Heart right ventricle (tissue), 16 donors: ENCODE measurements at regions of chr10 and their contacts with region 1.

Region 1: DNA sequence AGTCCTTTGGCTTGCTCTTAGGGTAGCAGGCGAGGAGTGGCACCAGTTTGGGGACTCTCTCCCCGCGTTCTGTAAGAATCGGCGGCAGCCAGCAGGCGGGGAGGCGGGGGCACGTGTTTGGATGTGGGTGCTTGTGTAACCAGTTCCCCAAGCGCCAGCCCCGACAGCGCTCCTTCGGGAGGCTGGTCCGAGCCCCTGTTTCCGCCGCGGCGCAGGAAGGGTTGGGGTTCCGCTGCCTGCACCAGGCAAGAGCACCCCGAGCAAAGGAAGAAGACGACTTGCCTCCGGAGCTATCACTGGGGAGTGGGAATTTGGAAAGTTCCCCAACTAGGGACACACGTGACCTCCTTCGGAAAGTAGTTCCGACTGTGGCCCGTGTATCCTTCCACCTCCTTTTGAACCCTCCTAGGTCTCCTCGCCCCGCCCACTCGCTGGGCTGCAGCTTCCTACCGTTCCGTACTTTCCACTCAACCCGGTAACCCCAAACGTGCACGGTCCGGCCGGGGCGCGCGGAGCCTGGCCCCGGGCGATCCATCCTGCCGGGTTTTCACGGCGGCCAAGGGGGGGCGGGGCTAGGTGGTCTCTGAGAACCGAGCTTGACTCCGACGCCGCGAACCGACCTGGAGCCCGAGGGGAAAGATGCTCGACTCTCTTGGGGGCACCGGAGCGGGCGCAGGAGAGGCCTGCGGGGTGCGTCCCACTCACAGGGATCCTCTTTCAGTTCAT is 1.2 kb downstream of the KLLN start:
- DNase-seq: peak; percentile 96 to 97
- ATAC-seq: peak; percentile 86 to 95 (median 92)
- H3K4me3 ChIP-seq: peak overlapping the region; percentile 77 to 90 (median 85)
- H3K27ac ChIP-seq: peak overlapping the region; percentile 91 to 99 (median 98)
- H3K4me1 ChIP-seq: peaks cover 0 to 20% (median 16%) of the 10 kb centered on the region in 9 donors
- H3K27me3 ChIP-seq: no peaks in the 10 kb centered on the region
- CTCF ChIP-seq: peak in 2 of 9 donors; percentile 7 to 20

Region 2: GRCh38 chr10:87700031-87700796 is 161.9 kb before region 1 on chr10:
- intact Hi-C with region 1: no loop called
- DNase-seq: no peak
- ATAC-seq: peak in 2 of 8 donors; percentile 11 to 19
- H3K4me3 ChIP-seq: no peak overlapping the region
- H3K27ac ChIP-seq: peak overlapping the region in 4 of 10 donors; percentile 11 to 43 (median 27)
- H3K4me1 ChIP-seq: peaks cover 0 to 8% (median 0%) of the 10 kb centered on the region in 9 donors
- H3K27me3 ChIP-seq: no peaks in the 10 kb centered on the region
- CTCF ChIP-seq: no peak

Region 3: DNA sequence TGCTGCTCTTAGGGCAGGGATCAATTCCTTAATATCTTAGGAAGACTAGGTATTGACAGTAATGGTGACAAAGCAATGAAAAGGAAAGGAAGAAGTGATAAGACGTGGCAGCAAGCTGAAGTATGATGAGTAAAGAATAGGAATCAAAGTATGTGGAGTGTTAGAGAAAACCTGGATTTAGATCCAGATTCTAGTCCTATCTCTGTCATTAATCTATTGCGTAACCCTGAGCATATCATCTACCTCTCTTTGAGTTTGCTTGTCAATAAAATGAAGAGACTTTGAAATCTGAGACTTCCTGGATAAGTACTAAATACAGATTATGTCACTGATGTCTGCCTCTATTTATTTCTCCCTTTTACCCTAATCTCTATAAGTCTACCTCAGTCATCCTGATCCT is 90.5 kb after region 1 on chr10:
- intact Hi-C with region 1: loop called in 2 of 10 experiments (anchors 5 to 10 kb)
- DNase-seq: no peak
- ATAC-seq: no peak
- H3K4me3 ChIP-seq: no peak overlapping the region
- H3K27ac ChIP-seq: no peak overlapping the region
- H3K4me1 ChIP-seq: peaks cover 0 to 33% (median 0%) of the 10 kb centered on the region in 9 donors
- H3K27me3 ChIP-seq: no peaks in the 10 kb centered on the region
- CTCF ChIP-seq: no peak

Region 4: DNA sequence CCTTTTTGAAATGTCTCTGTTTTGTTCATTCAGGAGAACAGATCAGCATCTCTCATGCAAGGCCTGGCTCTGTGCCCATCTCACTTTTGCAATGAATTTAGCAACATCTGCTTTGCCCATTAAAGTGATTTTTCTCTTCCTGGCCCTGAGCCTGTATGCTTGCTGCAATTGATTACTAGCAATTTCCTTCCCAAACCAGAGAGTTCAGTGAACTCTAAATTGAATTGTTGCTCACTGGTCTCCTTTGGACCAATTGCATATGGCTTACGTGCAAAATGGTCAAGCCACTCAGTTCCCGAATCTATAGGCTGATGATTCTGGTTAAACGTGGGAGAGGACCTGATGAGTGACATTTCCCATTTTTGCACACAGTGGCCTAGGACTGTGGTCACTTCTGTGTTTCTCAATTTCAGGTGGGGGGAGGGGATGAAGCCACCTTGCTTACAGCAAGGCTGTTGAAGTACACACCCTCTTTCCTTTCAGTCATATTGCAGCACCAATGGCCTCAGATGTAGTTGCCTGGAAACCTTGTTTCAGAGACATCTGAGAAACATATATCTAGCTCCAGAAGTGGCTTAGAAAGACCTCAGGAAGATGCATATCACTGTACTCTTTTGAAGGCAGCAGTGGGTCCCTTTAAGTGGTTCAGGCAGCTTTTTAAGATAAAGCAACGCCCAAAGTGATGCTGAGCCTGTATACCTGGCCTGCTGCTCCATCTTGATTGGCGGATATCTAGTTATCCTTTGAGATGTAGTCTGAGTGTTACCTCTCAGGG is 202.7 kb after region 1 on chr10:
- intact Hi-C with region 1: loop called in 1 of 10 experiments (anchors 5 kb)
- DNase-seq: peak; percentile 51 to 74
- ATAC-seq: peak in 7 of 8 donors; percentile 44 to 76 (median 65)
- H3K4me3 ChIP-seq: no peak overlapping the region
- H3K27ac ChIP-seq: peak overlapping the region in 6 of 10 donors; percentile 3 to 87 (median 61)
- H3K4me1 ChIP-seq: peaks cover 6 to 84% (median 46%) of the 10 kb centered on the region in 9 donors
- H3K27me3 ChIP-seq: no peaks in the 10 kb centered on the region
- CTCF ChIP-seq: no peak

Region 5: GRCh38 chr10:88243836-88244730 is 382.0 kb after region 1 on chr10:
- intact Hi-C with region 1: loop called in 5 of 10 experiments (anchors 5 to 10 kb)
- DNase-seq: peak; percentile 76 to 87
- ATAC-seq: peak; percentile 85 to 98 (median 90)
- H3K4me3 ChIP-seq: peak overlapping the region in 7 of 10 donors; percentile 1 to 38 (median 26)
- H3K27ac ChIP-seq: peak overlapping the region; percentile 65 to 90 (median 81)
- H3K4me1 ChIP-seq: peaks cover 8 to 58% (median 42%) of the 10 kb centered on the region in 9 donors
- H3K27me3 ChIP-seq: no peaks in the 10 kb centered on the region
- CTCF ChIP-seq: no peak

Region 6: DNA sequence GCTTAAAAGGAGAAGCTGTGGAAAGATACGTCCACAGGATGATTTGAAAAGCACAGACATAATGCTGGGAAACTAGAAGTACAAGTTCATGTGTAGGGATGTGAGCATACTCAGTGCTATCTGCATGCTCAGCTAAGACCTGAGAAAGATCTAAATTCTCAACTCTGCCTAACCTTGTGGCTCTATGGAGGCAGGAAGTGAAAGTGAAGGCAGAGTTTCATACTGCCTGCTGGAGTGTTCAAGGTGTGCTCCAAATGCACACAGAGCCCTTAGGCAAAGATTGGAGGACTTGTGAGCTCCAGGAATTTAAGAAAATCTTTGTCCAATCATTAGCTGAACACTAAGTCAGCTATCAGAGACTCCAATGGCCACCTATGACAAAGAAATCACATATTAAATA is 530.1 kb after region 1 on chr10:
- intact Hi-C with region 1: loop called in 8 of 10 experiments (anchors 2 to 5 kb)
- DNase-seq: no peak
- ATAC-seq: no peak
- H3K4me3 ChIP-seq: no peak overlapping the region
- H3K27ac ChIP-seq: no peak overlapping the region
- H3K4me1 ChIP-seq: peaks cover 0 to 26% (median 14%) of the 10 kb centered on the region in 9 donors
- H3K27me3 ChIP-seq: no peaks in the 10 kb centered on the region
- CTCF ChIP-seq: no peak